CD8-positive, alpha-beta T cell (primary cell): ENCODE measurements at regions of chr17 and their contacts with region 1.

Region 1: GRCh38 chr17:28416703-28417311 is 10.8 kb upstream of the SLC46A1 start:
- DNase-seq: peak; percentile 24 to 71 (median 51)
- ATAC-seq: peak; percentile 73
- H3K4me3 ChIP-seq: no peak overlapping the region
- H3K4me3 Mint-ChIP-seq: no peak overlapping the region
- H3K27ac ChIP-seq: no peak overlapping the region
- H3K27ac Mint-ChIP-seq: no peak overlapping the region
- H3K4me1 ChIP-seq: no peaks in the 10 kb centered on the region
- H3K4me1 Mint-ChIP-seq: no peaks in the 10 kb centered on the region
- H3K27me3 ChIP-seq: no peaks in the 10 kb centered on the region
- H3K27me3 Mint-ChIP-seq: peaks cover 5% of the 10 kb centered on the region
- CTCF ChIP-seq: peak; percentile 72

Region 2: DNA sequence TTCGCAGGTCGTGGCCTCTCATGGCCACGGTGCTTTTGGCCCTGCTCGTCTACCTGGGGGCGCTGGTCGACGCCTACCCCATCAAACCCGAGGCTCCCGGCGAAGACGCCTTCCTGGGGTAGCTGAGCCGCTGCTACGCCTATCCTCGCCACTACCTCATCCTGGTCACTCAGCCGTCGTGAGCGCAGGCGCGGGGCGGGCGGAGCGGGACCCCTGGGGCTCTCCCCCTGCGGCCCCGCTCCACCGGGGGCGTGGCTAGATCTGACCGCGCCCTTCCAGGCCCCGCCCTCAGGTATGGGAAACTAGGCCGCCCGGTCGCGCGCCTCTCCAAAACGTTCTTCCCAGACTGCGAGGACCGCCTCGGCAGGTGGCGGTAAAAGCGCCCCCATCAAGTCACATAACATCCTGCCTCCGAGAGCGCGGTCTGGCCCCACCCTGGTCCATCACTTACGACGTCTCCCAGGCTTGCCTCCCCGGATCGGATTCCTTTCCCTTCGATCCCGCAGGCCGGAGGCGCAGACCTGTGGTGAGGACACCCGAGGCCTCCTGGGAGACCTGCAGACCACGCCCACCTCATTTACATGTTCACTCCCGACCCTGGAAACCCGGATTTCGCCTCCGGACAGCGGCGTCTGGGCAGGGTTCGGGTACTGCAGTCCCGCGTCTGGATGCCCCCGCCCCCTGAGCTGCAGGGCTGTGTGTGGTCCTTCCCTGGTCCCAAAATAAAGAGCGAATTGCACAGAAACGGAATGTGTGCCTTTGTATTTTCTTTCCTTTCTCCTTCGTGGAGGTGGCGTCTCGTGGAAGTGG is 189.3 kb before region 1 on chr17:
- CTCF ChIA-PET with region 1: no interaction called
- POLR2A ChIA-PET with region 1: no interaction called
- intact Hi-C with region 1: loop called (anchors 5 to 10 kb)
- DNase-seq: peak in 2 of 9 experiments; percentile 24 to 36
- ATAC-seq: peak; percentile 40
- H3K4me3 ChIP-seq: peak overlapping the region; percentile 13 to 36
- H3K4me3 Mint-ChIP-seq: peak overlapping the region; percentile 57
- H3K27ac ChIP-seq: no peak overlapping the region
- H3K27ac Mint-ChIP-seq: no peak overlapping the region
- H3K4me1 ChIP-seq: peaks cover 7% of the 10 kb centered on the region
- H3K4me1 Mint-ChIP-seq: peaks cover 10% of the 10 kb centered on the region
- H3K27me3 ChIP-seq: peaks cover 7 to 31% of the 10 kb centered on the region in 2 experiments
- H3K27me3 Mint-ChIP-seq: peaks cover 49% of the 10 kb centered on the region
- CTCF ChIP-seq: no peak

Region 3: GRCh38 chr17:28398280-28398981 is 18.4 kb before region 1 on chr17:
- CTCF ChIA-PET with region 1: interaction called, 34 read pairs
- POLR2A ChIA-PET with region 1: interaction called, 5 read pairs
- intact Hi-C with region 1: no loop called
- DNase-seq: no peak
- ATAC-seq: no peak
- H3K4me3 ChIP-seq: no peak overlapping the region
- H3K4me3 Mint-ChIP-seq: no peak overlapping the region
- H3K27ac ChIP-seq: no peak overlapping the region
- H3K27ac Mint-ChIP-seq: peak overlapping the region; percentile 70
- H3K4me1 ChIP-seq: no peaks in the 10 kb centered on the region
- H3K4me1 Mint-ChIP-seq: no peaks in the 10 kb centered on the region
- H3K27me3 ChIP-seq: no peaks in the 10 kb centered on the region
- H3K27me3 Mint-ChIP-seq: no peaks in the 10 kb centered on the region
- CTCF ChIP-seq: no peak

Region 4: DNA sequence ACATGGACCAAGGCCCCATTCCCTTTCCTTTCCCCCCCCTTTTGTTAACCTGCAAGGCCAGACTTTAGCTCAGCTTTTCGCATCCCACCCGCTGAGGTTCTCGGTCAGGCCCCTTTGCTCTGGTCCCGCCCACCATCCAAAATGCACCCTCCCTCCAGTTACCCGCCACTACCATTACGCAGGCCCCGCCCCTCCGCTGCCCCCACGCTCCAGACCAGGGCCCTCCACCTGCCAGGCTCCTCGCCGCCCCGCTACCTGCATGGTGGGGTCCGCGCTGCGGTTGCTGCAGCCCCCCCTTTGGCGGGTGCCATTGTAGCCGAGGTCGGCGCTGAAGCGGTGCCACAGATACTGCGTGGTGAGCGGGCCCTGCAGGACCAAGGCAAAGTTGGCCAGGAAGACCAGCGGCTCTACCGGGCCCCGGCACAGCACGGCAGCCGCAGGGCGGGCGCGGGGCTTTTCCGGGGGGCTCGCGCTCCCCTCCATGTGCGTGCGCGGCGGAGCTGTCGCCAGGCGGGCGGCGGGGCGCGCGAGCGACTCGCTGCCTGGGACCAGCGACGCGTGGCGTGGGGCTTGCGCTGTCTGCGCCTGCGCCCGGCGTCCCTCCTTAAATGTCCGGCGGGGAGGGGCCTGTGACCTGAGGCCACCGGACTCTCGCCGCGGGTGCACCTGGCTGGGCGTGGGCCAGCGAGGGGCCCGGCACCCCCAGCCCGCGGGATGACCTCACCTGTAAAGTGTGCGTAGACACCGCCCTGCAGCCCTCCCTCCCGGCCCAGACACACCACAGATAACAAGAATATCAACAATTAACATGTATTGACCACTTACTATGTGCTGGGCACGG is 11.0 kb before region 1 on chr17 and contains the start of gene SLC46A1:
- CTCF ChIA-PET with region 1: interaction called, 34 read pairs
- POLR2A ChIA-PET with region 1: interaction called, 4 read pairs
- intact Hi-C with region 1: no loop called
- DNase-seq: peak in 6 of 9 experiments; percentile 20 to 58 (median 45)
- ATAC-seq: peak; percentile 75
- H3K4me3 ChIP-seq: peak within 1 kb of the TSS; percentile 57 to 75
- H3K4me3 Mint-ChIP-seq: peak within 1 kb of the TSS; percentile 85
- H3K27ac ChIP-seq: no peak within 1 kb of the TSS
- H3K27ac Mint-ChIP-seq: peak within 1 kb of the TSS; percentile 39
- H3K4me1 ChIP-seq: peaks cover 13% of the 10 kb centered on the region
- H3K4me1 Mint-ChIP-seq: peaks cover 11% of the 10 kb centered on the region
- H3K27me3 ChIP-seq: peaks cover 0 to 4% of the 10 kb centered on the region in 2 experiments
- H3K27me3 Mint-ChIP-seq: peaks cover 8% of the 10 kb centered on the region
- CTCF ChIP-seq: no peak
- total RNA-seq, gene SLC46A1: 0.47 to 0.49 TPM

Region 5: DNA sequence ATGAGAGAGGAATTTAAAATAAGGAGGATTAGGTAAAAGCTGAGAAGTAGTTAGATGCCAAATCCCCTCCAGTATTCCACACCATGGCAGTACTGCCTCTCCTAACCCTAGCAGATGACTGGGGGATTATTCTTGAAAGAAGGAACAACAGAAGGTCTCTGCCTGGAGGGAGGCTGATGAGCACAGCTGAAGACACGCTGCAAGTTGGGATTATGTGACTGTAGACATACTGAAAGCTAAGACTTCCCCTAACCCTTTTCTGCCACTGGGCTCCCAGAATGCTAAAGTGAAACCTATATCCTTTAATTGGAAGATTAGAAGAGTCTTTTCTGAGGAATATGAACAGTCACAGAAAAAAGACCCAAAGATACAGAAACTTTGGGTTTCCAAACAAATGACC is 16.9 kb after region 1 on chr17:
- CTCF ChIA-PET with region 1: interaction called, 11 read pairs
- POLR2A ChIA-PET with region 1: no interaction called
- intact Hi-C with region 1: no loop called
- DNase-seq: no peak
- ATAC-seq: no peak
- H3K4me3 ChIP-seq: no peak overlapping the region
- H3K4me3 Mint-ChIP-seq: no peak overlapping the region
- H3K27ac ChIP-seq: no peak overlapping the region
- H3K27ac Mint-ChIP-seq: no peak overlapping the region
- H3K4me1 ChIP-seq: no peaks in the 10 kb centered on the region
- H3K4me1 Mint-ChIP-seq: no peaks in the 10 kb centered on the region
- H3K27me3 ChIP-seq: no peaks in the 10 kb centered on the region
- H3K27me3 Mint-ChIP-seq: peaks cover 19% of the 10 kb centered on the region
- CTCF ChIP-seq: no peak